ENCODE measurements at regions of chr1 and their contacts with region 1.

Region 1: GRCh38 chr1:24805534-24806301 is 60.5 kb downstream of the CLIC4 start:
- DNase-seq: peak; percentile 95
- H3K4me3 ChIP-seq: peak overlapping the region in 1 of 3 experiments; percentile 52
- H3K27ac ChIP-seq: peak overlapping the region; percentile 86
- H3K4me1 ChIP-seq: peaks cover 61% of the 10 kb centered on the region
- H3K27me3 ChIP-seq: no peaks in the 10 kb centered on the region
- CTCF ChIP-seq: no peak
- POLR2A ChIP-seq: peak; percentile 34

Region 2: GRCh38 chr1:24754229-24754628 is 51.5 kb before region 1 on chr1:
- CTCF ChIA-PET with region 1: interaction called, 5 read pairs
- POLR2A ChIA-PET with region 1: interaction called, 11 read pairs
- dilution Hi-C with region 1: no loop called
- intact Hi-C with region 1: no loop called
- DNase-seq: peak; percentile 85
- H3K4me3 ChIP-seq: no peak overlapping the region
- H3K27ac ChIP-seq: peak overlapping the region; percentile 49
- H3K4me1 ChIP-seq: peaks cover 35% of the 10 kb centered on the region
- H3K27me3 ChIP-seq: no peaks in the 10 kb centered on the region
- CTCF ChIP-seq: no peak
- POLR2A ChIP-seq: no peak

Region 3: GRCh38 chr1:24793447-24794131 is 12.1 kb before region 1 on chr1:
- CTCF ChIA-PET with region 1: interaction called, 7 read pairs
- POLR2A ChIA-PET with region 1: no interaction called
- dilution Hi-C with region 1: no loop called
- intact Hi-C with region 1: loop called (anchors 1 kb)
- DNase-seq: peak; percentile 61
- H3K4me3 ChIP-seq: no peak overlapping the region
- H3K27ac ChIP-seq: peak overlapping the region; percentile 32
- H3K4me1 ChIP-seq: peaks cover 8% of the 10 kb centered on the region
- H3K27me3 ChIP-seq: no peaks in the 10 kb centered on the region
- CTCF ChIP-seq: no peak
- POLR2A ChIP-seq: no peak

Measured in endothelial cell of umbilical vein (primary cell).